HepG2 (cell line): ENCODE measurements at regions of chr20 and their contacts with region 1.

Region 1: DNA sequence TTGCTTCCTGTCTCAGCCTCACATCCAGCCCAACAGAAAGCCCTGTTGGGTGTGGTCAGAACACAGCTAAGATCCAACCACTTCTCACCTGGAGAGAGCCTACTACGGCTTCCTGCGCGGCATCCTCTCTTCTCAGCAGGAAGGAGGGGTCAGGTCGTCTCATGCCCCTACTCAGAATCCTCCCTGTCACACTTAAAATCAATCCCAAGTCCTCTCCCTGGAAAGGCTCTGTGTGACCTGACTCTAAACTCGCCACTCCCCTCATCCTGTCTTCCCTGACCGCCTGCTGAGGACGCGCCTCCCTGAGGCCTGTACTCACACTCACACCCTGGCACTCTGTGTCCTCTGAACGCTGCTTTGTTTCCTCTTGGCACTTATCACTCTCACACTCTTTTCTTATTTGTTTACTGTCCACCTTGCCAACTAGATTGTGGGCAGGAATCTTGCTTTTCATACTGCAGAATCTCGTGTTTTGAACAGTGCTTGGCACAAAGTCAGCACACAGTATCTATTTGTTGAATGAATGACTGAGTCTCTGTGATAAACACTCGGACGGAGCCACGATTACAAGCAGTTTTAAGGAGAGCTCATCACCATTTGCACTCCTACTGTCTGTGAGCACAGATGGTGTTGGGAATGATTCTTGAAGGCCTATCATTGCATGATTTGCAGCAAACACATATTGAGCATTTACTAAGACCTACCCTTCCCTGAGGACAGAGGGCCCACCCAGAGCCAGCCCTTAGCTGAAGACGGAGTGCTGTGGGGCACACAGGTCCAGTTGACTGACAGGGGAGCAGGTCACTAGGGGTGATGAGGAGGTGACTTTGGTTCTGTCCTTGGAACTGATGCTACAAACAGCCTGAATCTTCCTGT is 18.7 kb downstream of the RAB5IF start:
- DNase-seq: peak; percentile 49
- ATAC-seq: peak; percentile 94
- H3K4me3 ChIP-seq: peak overlapping the region; percentile 4 to 42 (median 20); a peak in 3 of 6 replicates
- H3K27ac ChIP-seq: peak overlapping the region; percentile 18
- H3K4me1 ChIP-seq: peaks cover 37% of the 10 kb centered on the region
- H3K27me3 ChIP-seq: no peaks in the 10 kb centered on the region
- CTCF ChIP-seq: peak; percentile 61
- EP300 ChIP-seq: no peak
- POLR2A ChIP-seq: 0 out of 4 replicates have a peak, but pooled peaks of 1 of the 2 experiments have one; percentile 42
- RAD21 ChIP-seq: no peak

Region 2: DNA sequence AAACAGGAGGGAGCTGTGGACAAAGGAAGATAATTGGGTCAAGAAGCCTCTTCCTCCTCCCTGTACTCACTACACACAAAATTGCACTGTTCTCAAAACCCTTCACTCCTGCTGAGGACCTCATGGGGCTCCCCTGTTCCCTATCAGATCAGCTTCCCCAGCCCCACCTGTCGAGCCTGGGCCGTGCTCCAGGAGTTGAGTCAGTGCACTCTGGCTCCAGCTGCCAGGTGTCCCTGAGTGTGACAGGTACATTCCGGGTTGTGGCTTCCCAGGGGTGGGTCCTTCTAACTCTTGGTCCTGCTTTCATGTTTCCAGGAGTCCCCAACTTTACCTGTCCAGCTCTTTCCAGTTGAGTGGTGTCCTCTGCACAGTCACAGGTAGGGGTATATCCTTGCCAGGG is 10.3 kb before region 1 on chr20:
- CTCF ChIA-PET with region 1: no interaction called
- POLR2A ChIA-PET with region 1: interaction called, 52 read pairs
- in situ Hi-C with region 1: no loop called
- intact Hi-C with region 1: no loop called
- DNase-seq: no peak
- ATAC-seq: peak; percentile 8
- H3K4me3 ChIP-seq: no peak overlapping the region
- H3K27ac ChIP-seq: no peak overlapping the region
- H3K4me1 ChIP-seq: no peaks in the 10 kb centered on the region
- H3K27me3 ChIP-seq: no peaks in the 10 kb centered on the region
- CTCF ChIP-seq: no peak
- EP300 ChIP-seq: no peak
- POLR2A ChIP-seq: peak in 1 of 2 experiments; percentile 38; a peak in 2 of 4 replicates
- RAD21 ChIP-seq: no peak

Region 3: GRCh38 chr20:36645998-36646397 is 21.7 kb after region 1 on chr20 and contains the start of gene SLA2:
- CTCF ChIA-PET with region 1: no interaction called
- POLR2A ChIA-PET with region 1: interaction called, 14 read pairs
- in situ Hi-C with region 1: no loop called
- intact Hi-C with region 1: no loop called
- DNase-seq: no peak
- ATAC-seq: no peak
- H3K4me3 ChIP-seq: no peak within 1 kb of the TSS
- H3K27ac ChIP-seq: peak within 1 kb of the TSS; percentile 59
- H3K4me1 ChIP-seq: peaks cover 82% of the 10 kb centered on the region
- H3K27me3 ChIP-seq: no peaks in the 10 kb centered on the region
- CTCF ChIP-seq: no peak
- EP300 ChIP-seq: no peak
- POLR2A ChIP-seq: no peak
- RAD21 ChIP-seq: no peak
- total RNA-seq, gene SLA2: 1.6 and 1.8 TPM in 2 replicates

Region 4: GRCh38 chr20:37276494-37277252 is 652.4 kb after region 1 on chr20:
- CTCF ChIA-PET with region 1: no interaction called
- POLR2A ChIA-PET with region 1: no interaction called
- in situ Hi-C with region 1: no loop called
- intact Hi-C with region 1: no loop called
- DNase-seq: peak; percentile 49
- ATAC-seq: peak; percentile 76
- H3K4me3 ChIP-seq: peak overlapping the region in 1 of 3 experiments; percentile 43; a peak in 2 of 6 replicates
- H3K27ac ChIP-seq: no peak overlapping the region
- H3K4me1 ChIP-seq: peaks cover 65% of the 10 kb centered on the region
- H3K27me3 ChIP-seq: no peaks in the 10 kb centered on the region; a peak in 2 of 5 replicates
- CTCF ChIP-seq: peak; percentile 77
- EP300 ChIP-seq: 0 out of 4 replicates have a peak, but pooled peaks of 1 of the 2 experiments have one; percentile 1
- POLR2A ChIP-seq: no peak
- RAD21 ChIP-seq: peak; percentile 34; the same call in 1 of the 2 replicates